ENCODE measurements at regions of chr17 and their contacts with region 1.

Region 1: DNA sequence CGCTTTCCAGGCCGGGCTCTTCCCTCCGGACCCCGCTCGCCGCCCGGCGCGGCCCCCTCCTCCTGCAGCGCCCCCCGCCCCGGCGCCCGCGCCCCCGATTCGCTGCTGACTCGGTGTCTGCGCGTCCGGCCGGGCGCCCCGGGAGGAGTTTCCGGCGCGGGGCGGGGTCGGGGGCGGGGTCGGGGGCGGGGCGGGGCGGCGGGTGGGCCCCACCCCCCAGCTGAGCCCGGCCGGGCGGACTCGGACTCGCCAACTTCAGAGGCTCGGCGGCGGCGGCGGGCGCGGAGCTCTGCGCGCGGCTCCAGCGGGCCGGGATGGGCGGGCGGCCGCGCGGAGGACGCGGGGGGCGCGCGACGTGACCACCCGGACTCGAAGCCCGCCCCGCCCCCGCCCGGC is at the start of gene METRNL:
- DNase-seq: peak; percentile 89 to 95
- ATAC-seq: peak; percentile 56
- H3K4me3 ChIP-seq: peak within 1 kb of the TSS; percentile 92 to 95
- H3K27ac ChIP-seq: peak within 1 kb of the TSS; percentile 46 to 76
- H3K4me1 ChIP-seq: no peaks in the 10 kb centered on the region
- H3K27me3 ChIP-seq: no peaks in the 10 kb centered on the region
- total RNA-seq, gene METRNL: 126 to 176 TPM

Region 2: GRCh38 chr17:82962864-82963684 is 116.3 kb before region 1 on chr17:
- intact Hi-C with region 1: loop called in 1 of 2 experiments (anchors 5 kb)
- DNase-seq: peak; percentile 94 to 95
- ATAC-seq: peak; percentile 90
- H3K4me3 ChIP-seq: no peak overlapping the region
- H3K27ac ChIP-seq: no peak overlapping the region
- H3K4me1 ChIP-seq: no peaks in the 10 kb centered on the region
- H3K27me3 ChIP-seq: no peaks in the 10 kb centered on the region

Region 3: GRCh38 chr17:83055911-83056582 is 23.3 kb before region 1 on chr17:
- intact Hi-C with region 1: loop called in 1 of 2 experiments (anchors 1 kb)
- DNase-seq: peak; percentile 55 to 83
- ATAC-seq: peak; percentile 56
- H3K4me3 ChIP-seq: no peak overlapping the region
- H3K27ac ChIP-seq: peak overlapping the region in 1 of 2 donors; percentile 68
- H3K4me1 ChIP-seq: no peaks in the 10 kb centered on the region
- H3K27me3 ChIP-seq: no peaks in the 10 kb centered on the region